ENCODE measurements at regions of chr11 and their contacts with region 1.

Region 1: DNA sequence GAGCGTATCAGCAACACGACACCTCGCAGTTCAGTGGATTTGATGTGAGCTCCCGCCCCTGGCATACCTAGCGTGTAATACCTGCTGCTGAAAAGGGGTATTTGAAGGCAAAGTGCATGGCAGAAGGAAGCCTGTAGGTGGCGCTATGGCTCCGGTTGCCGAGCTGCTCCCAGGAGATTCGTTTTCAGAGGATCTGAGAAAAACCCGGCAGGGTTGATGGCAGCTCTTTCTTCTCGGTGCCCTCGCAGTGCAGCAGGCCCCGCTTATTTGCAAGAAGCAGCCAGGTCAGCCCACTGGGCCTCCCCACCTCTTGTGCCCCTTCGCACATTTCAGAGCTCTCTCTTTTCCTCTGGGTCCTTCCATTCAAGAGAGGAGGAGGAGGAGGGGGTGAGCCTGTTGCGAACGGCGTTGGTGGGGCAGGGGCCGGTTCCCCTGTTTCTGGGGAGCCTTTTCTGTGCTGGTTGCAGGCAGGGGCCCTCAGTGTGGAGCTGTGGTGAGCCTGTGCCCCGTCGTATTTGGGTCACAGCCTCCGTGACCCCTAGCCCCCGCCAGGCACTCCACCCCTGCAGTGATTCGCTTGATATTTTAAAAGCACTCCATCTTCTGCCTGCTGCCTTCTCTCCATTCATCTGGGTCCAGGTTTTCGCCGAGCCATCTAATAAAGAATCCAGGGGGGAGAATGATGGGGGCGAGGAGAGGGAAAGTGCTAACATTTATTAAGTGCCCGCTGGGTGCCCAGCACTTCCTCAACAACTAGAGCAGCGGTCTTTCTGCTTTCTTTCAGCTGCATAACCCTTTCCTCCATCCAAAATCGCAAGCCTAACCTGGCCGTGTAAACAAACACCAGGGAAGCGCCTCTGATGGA is 85.3 kb upstream of the SYT13 start:
- DNase-seq: peak; percentile 41
- ATAC-seq: peak; percentile 88
- H3K4me3 ChIP-seq: no peak overlapping the region
- H3K27ac ChIP-seq: no peak overlapping the region
- H3K4me1 ChIP-seq: peaks cover 4% of the 10 kb centered on the region; the same call in 1 of the 2 replicates
- H3K27me3 ChIP-seq: peaks cover 16% of the 10 kb centered on the region
- CTCF ChIP-seq: peak; percentile 96

Region 2: DNA sequence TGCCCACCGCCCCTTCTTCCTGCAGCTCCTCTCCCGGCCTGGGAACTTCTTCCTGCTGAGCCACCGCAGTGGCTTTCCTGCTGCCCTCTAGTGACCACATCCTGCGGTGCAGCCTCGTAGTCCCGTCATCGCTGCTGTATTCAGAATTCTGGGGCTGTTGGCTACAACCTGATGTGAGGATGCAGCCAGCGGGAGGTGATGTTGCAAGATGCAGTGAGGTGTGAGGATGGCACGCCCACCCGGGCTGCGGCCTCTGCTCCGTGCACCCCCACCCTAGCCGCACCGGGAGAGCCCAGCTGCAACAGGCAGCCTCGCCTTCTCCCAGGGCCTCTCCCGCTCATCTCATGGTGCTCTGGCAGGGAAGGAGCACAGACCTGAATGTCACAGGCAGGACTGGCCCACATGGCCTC is 283.9 kb after region 1 on chr11:
- CTCF ChIA-PET with region 1: interaction called, 13 read pairs
- POLR2A ChIA-PET with region 1: interaction called, 7 read pairs
- in situ Hi-C with region 1: no loop called
- intact Hi-C with region 1: loop called (anchors 10 kb)
- DNase-seq: peak; percentile 43
- ATAC-seq: peak; percentile 91
- H3K4me3 ChIP-seq: no peak overlapping the region
- H3K27ac ChIP-seq: no peak overlapping the region
- H3K4me1 ChIP-seq: no peaks in the 10 kb centered on the region
- H3K27me3 ChIP-seq: peaks cover 2% of the 10 kb centered on the region; the same call in 1 of the 2 replicates
- CTCF ChIP-seq: peak; percentile 97